WTC11 (cell line): ENCODE measurements at regions of chr5 and their contacts with region 1.

Region 1: DNA sequence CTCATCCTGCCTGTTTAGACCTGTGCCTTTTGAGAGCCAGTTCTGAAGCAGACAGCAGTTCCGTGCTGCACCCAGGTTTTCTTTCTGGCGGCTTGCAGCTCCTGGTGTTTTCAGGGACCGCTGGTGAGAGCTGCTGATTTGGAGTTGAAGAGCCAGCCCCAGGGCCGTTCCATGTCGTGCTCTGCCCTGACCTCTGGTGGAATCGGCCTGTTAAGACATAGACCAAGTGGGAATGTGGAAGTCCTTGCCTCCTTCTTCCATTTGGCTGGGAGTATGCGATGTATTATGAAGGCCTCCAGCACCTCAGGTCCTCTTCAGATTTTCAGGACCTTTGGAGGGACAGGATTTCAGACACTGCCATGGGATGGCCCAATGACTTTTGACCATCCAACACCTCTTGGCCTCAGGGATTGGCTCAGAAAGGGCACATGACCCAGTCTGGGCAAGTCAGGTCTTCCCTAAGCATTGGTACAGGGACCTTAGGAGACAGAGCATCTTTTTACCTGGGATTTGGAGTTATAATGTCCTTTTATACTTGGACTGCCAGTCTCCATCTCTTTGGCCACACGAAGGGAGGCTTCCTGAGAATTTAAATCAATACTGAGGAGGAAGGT is 136.1 kb upstream of the CLINT1 start:
- DNase-seq: peak; percentile 83
- ATAC-seq: peak; percentile 100
- H3K4me3 Mint-ChIP-seq: no peak overlapping the region
- H3K27ac Mint-ChIP-seq: no peak overlapping the region
- H3K4me1 Mint-ChIP-seq: peaks cover 8% of the 10 kb centered on the region
- H3K27me3 Mint-ChIP-seq: no peaks in the 10 kb centered on the region
- CTCF ChIP-seq: peak; percentile 33; the same call in 1 of the 2 replicates

Region 2: GRCh38 chr5:157820593-157821252 is 174.3 kb before region 1 on chr5:
- CTCF ChIA-PET with region 1: interaction called, 16 read pairs
- POLR2A ChIA-PET with region 1: no interaction called
- DNase-seq: no peak
- ATAC-seq: no peak; the same call in 1 of the 2 replicates
- H3K4me3 Mint-ChIP-seq: no peak overlapping the region
- H3K27ac Mint-ChIP-seq: peak overlapping the region; percentile 61; the same call in 1 of the 2 replicates
- H3K4me1 Mint-ChIP-seq: peaks cover 42% of the 10 kb centered on the region
- H3K27me3 Mint-ChIP-seq: no peaks in the 10 kb centered on the region
- CTCF ChIP-seq: peak; percentile 27; the same call in 1 of the 2 replicates

Region 3: GRCh38 chr5:157858527-157859226 is 136.3 kb before region 1 on chr5 and contains the start of gene CLINT1:
- CTCF ChIA-PET with region 1: interaction called, 24 read pairs
- POLR2A ChIA-PET with region 1: no interaction called
- DNase-seq: peak; percentile 92
- ATAC-seq: peak; percentile 88
- H3K4me3 Mint-ChIP-seq: peak within 1 kb of the TSS; percentile 80
- H3K27ac Mint-ChIP-seq: peak within 1 kb of the TSS; percentile 93
- H3K4me1 Mint-ChIP-seq: peaks cover 51% of the 10 kb centered on the region
- H3K27me3 Mint-ChIP-seq: no peaks in the 10 kb centered on the region; the same call in 1 of the 2 replicates
- CTCF ChIP-seq: no peak
- total RNA-seq, gene CLINT1: 74.6 to 79.6 TPM (median 76.1 TPM) in 3 replicates

Region 4: DNA sequence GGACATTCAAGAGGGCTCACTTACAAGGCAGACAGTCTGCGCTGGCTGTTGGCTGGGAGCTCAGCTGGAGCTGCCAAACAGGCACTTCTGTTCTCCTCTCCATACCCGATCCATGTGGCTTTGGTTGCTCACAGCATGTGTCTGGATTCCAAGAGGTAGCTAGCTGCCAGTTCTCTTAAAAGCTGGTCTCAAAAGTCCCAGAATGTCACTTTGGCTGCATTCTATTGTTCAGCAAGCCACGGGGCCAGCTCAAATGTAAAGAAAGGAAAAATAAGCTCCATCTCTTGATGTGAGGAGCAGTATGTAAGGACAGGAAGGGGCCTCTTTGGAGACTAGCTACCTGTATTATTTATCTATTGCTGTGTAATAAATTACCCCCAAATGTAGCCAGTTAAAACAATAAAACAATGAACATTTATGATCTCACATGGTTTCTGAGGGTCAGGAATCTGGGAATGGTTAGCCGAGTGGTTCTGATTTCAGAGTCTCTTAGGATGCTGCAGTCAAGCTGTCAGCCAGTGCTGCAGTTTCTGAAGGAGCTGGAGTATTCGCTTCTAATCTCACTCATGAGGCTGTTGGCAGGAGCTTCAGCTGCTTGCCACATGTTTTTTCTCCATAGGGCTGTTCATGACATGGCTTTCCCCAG is 23.3 kb before region 1 on chr5:
- CTCF ChIA-PET with region 1: interaction called, 15 read pairs
- POLR2A ChIA-PET with region 1: no interaction called
- DNase-seq: peak; percentile 31
- ATAC-seq: peak; percentile 89
- H3K4me3 Mint-ChIP-seq: no peak overlapping the region
- H3K27ac Mint-ChIP-seq: peak overlapping the region; percentile 58; the same call in 1 of the 2 replicates
- H3K4me1 Mint-ChIP-seq: peaks cover 33% of the 10 kb centered on the region
- H3K27me3 Mint-ChIP-seq: no peaks in the 10 kb centered on the region
- CTCF ChIP-seq: no peak

Region 5: DNA sequence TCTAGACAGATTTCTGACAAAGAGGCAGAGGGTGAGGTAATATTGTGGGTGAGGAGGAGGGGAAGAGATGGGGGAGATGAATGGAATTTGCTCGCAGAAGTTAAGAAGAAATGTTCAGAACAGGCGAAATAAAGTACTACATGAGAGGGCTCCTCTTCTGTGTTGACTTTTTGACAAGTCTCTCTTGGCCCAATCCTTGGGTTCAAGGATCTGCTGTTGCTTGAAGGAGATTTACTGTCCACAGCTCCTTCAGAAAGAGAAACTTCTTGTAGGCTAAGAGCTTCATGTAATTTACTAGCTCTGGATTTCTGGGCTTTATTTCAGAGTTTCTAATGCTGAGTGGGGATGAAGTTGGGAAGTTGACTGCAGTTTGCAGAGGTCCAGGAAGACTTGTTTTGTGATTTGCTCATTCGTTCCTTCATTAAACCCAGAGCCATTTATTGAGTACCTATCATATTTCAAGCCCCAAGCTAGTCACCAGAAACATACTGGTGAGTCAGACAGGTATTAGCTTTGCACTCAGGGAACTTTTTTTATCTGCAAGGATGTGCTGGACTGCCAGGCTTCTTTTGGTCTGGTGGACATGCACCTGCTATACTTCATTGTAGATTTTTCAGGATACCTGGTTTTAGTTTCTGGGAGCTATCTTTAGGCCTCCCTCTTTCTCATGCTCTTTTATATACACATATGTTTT is 266.8 kb after region 1 on chr5:
- CTCF ChIA-PET with region 1: no interaction called
- POLR2A ChIA-PET with region 1: no interaction called
- DNase-seq: no peak
- ATAC-seq: no peak
- H3K4me3 Mint-ChIP-seq: no peak overlapping the region
- H3K27ac Mint-ChIP-seq: no peak overlapping the region
- H3K4me1 Mint-ChIP-seq: no peaks in the 10 kb centered on the region
- H3K27me3 Mint-ChIP-seq: no peaks in the 10 kb centered on the region
- CTCF ChIP-seq: no peak